PC-9 (cell line): ENCODE measurements at regions of chr16 and their contacts with region 1.

Region 1: GRCh38 chr16:819336-820043 is 19.0 kb upstream of the GNG13 start:
- DNase-seq: no peak
- H3K4me3 ChIP-seq: no peak overlapping the region
- H3K27ac ChIP-seq: no peak overlapping the region
- H3K4me1 ChIP-seq: peaks cover 11% of the 10 kb centered on the region
- H3K27me3 ChIP-seq: peaks cover 65% of the 10 kb centered on the region
- CTCF ChIP-seq: no peak

Region 2: GRCh38 chr16:700684-701584 is 118.6 kb before region 1 on chr16:
- CTCF ChIA-PET with region 1: no interaction called
- POLR2A ChIA-PET with region 1: no interaction called
- intact Hi-C with region 1: no loop called
- DNase-seq: no peak
- H3K4me3 ChIP-seq: no peak overlapping the region
- H3K27ac ChIP-seq: no peak overlapping the region
- H3K4me1 ChIP-seq: no peaks in the 10 kb centered on the region; the same call in 1 of the 2 replicates
- H3K27me3 ChIP-seq: peaks cover 45% of the 10 kb centered on the region
- CTCF ChIP-seq: no peak

Region 3: DNA sequence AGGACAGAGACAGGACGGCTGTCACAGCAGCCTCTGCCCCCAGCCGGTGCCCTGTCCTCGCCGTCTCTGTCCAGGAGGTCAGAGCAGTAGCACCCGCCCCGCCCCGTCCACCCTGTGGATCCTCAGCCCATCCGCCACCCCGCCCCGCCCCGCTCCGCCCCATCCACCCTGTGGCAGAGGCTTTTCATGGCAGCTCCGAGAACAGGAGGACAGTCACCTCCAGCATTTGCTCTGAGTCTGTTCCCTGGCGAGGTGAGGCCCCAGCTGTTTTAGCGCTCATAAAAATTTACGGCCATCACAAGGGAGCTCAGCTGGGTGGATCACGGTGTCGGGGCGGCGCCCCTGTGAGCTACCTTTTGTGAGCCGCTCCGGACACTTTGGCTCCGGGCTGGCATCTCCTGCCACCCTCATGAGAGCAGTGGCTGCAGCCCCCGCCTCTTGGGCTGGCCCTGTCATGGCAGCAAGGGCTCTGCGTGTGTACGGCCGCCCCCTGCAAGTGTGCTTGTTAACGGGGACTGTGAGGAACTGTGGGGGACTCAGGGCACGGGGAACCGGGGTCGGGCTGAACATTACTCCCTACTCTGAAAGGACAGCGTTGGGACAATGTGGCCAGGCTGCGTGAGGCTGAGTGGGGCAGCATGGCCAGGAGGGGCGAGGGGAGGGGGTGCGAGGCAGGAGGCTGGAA is 13.3 kb after region 1 on chr16:
- CTCF ChIA-PET with region 1: no interaction called
- POLR2A ChIA-PET with region 1: no interaction called
- intact Hi-C with region 1: no loop called
- DNase-seq: no peak
- H3K4me3 ChIP-seq: no peak overlapping the region
- H3K27ac ChIP-seq: no peak overlapping the region
- H3K4me1 ChIP-seq: no peaks in the 10 kb centered on the region
- H3K27me3 ChIP-seq: peaks cover 85% of the 10 kb centered on the region
- CTCF ChIP-seq: no peak

Region 4: GRCh38 chr16:852451-853185 is 33.1 kb after region 1 on chr16:
- CTCF ChIA-PET with region 1: no interaction called
- POLR2A ChIA-PET with region 1: no interaction called
- intact Hi-C with region 1: no loop called
- DNase-seq: no peak
- H3K4me3 ChIP-seq: no peak overlapping the region
- H3K27ac ChIP-seq: no peak overlapping the region
- H3K4me1 ChIP-seq: no peaks in the 10 kb centered on the region
- H3K27me3 ChIP-seq: peaks cover 74% of the 10 kb centered on the region
- CTCF ChIP-seq: no peak

Region 5: DNA sequence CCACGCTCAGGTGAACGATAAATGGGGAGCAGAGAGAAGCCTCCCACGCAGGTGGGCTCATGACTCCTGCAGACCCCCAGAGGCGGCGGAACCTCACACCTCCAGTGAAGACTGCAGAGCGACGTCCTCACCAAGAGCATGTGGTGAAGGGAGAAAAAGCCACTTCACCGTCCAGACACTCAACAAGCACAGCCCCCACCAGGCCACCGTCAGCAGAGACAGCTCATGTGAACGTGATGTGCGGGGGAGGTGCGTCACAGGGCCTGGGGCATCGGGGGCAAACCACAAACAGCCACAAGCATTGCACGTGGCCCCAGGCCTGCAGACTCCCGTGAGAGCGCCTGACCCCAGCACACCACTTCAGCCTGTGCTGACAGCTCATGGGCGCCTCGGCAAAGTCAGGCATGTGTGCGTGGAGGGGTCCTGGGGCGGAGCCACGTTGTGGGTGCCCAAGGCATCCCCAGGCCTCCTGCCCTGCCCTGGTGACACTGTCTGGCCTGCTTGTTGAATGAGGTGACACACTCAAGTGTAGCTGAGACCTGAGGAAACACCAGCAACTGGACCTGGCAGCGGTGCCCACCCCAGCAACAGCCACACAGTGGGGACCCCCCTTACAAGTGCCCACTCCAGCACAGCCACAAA is 132.3 kb after region 1 on chr16:
- CTCF ChIA-PET with region 1: no interaction called
- POLR2A ChIA-PET with region 1: no interaction called
- intact Hi-C with region 1: no loop called
- DNase-seq: no peak
- H3K4me3 ChIP-seq: no peak overlapping the region
- H3K27ac ChIP-seq: no peak overlapping the region
- H3K4me1 ChIP-seq: no peaks in the 10 kb centered on the region
- H3K27me3 ChIP-seq: no peaks in the 10 kb centered on the region
- CTCF ChIP-seq: no peak

Region 6: GRCh38 chr16:997440-998051 is 178.1 kb after region 1 on chr16:
- CTCF ChIA-PET with region 1: interaction called, 16 read pairs
- POLR2A ChIA-PET with region 1: no interaction called
- intact Hi-C with region 1: no loop called
- DNase-seq: peak; percentile 69 to 88
- H3K4me3 ChIP-seq: peak overlapping the region; percentile 44; the same call in 1 of the 2 replicates
- H3K27ac ChIP-seq: no peak overlapping the region
- H3K4me1 ChIP-seq: peaks cover 21% of the 10 kb centered on the region
- H3K27me3 ChIP-seq: peaks cover 57% of the 10 kb centered on the region
- CTCF ChIP-seq: no peak